Activated CD4-positive, alpha-beta memory T cell treated with anti-CD3 and anti-CD28 coated beads, Interleukin-2, amount 10 ng/mL, durations not matched to agents 7 days and 5 days (primary cell): ENCODE measurements at regions of chr9 and their contacts with region 1.

Region 1: DNA sequence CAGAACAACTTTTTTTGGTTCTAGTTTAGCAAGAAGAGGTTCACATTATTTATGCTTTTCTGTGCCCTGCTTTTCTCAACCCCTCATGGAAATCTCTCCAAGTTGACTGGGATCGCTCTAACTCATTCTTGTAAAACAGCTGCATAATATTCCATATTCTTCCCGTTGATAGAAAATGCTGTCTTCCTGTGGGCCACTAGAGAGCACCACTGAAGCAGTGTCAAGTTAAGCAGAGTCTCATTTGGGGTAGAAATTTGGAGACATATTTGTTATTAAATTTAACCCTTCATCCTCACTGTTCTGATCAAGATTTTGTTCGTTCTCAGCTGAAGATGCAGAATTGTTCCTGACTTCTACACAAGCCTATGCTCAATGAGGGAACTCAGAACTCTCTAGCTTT is 140.1 kb downstream of the CEMIP2 start:
- DNase-seq: no peak
- H3K4me3 Mint-ChIP-seq: no peak overlapping the region
- H3K27ac Mint-ChIP-seq: no peak overlapping the region
- H3K4me1 Mint-ChIP-seq: peaks cover 42% of the 10 kb centered on the region
- H3K27me3 Mint-ChIP-seq: peaks cover 10% of the 10 kb centered on the region

Region 2: GRCh38 chr9:71271602-71272001 is 356.6 kb before region 1 on chr9:
- CTCF ChIA-PET with region 1: no interaction called
- POLR2A ChIA-PET with region 1: no interaction called
- DNase-seq: no peak
- H3K4me3 Mint-ChIP-seq: no peak overlapping the region
- H3K27ac Mint-ChIP-seq: no peak overlapping the region
- H3K4me1 Mint-ChIP-seq: no peaks in the 10 kb centered on the region
- H3K27me3 Mint-ChIP-seq: no peaks in the 10 kb centered on the region

Region 3: GRCh38 chr9:71604197-71605063 is 23.8 kb before region 1 on chr9:
- CTCF ChIA-PET with region 1: interaction called, 12 read pairs
- POLR2A ChIA-PET with region 1: no interaction called
- DNase-seq: peak; percentile 85
- H3K4me3 Mint-ChIP-seq: no peak overlapping the region
- H3K27ac Mint-ChIP-seq: no peak overlapping the region
- H3K4me1 Mint-ChIP-seq: no peaks in the 10 kb centered on the region
- H3K27me3 Mint-ChIP-seq: peaks cover 7% of the 10 kb centered on the region

Region 4: GRCh38 chr9:71638627-71639026 is 10.4 kb after region 1 on chr9:
- CTCF ChIA-PET with region 1: interaction called, 16 read pairs
- POLR2A ChIA-PET with region 1: interaction called, 9 read pairs
- DNase-seq: peak; percentile 59
- H3K4me3 Mint-ChIP-seq: peak overlapping the region; percentile 57
- H3K27ac Mint-ChIP-seq: peak overlapping the region; percentile 94
- H3K4me1 Mint-ChIP-seq: peaks cover 42% of the 10 kb centered on the region
- H3K27me3 Mint-ChIP-seq: no peaks in the 10 kb centered on the region

Region 5: GRCh38 chr9:71683598-71684235 is 55.5 kb after region 1 on chr9:
- CTCF ChIA-PET with region 1: interaction called, 17 read pairs
- POLR2A ChIA-PET with region 1: interaction called, 4 read pairs
- DNase-seq: no peak
- H3K4me3 Mint-ChIP-seq: peak overlapping the region; percentile 53
- H3K27ac Mint-ChIP-seq: peak overlapping the region; percentile 80
- H3K4me1 Mint-ChIP-seq: peaks cover 64% of the 10 kb centered on the region
- H3K27me3 Mint-ChIP-seq: no peaks in the 10 kb centered on the region

Region 6: GRCh38 chr9:71716138-71716909 is 88.1 kb after region 1 on chr9:
- CTCF ChIA-PET with region 1: interaction called, 56 read pairs
- POLR2A ChIA-PET with region 1: interaction called, 3 read pairs
- DNase-seq: no peak
- H3K4me3 Mint-ChIP-seq: no peak overlapping the region
- H3K27ac Mint-ChIP-seq: no peak overlapping the region
- H3K4me1 Mint-ChIP-seq: peaks cover 3% of the 10 kb centered on the region
- H3K27me3 Mint-ChIP-seq: no peaks in the 10 kb centered on the region